A673 (cell line): ENCODE measurements at regions of chr4 and their contacts with region 1.

Region 1: DNA sequence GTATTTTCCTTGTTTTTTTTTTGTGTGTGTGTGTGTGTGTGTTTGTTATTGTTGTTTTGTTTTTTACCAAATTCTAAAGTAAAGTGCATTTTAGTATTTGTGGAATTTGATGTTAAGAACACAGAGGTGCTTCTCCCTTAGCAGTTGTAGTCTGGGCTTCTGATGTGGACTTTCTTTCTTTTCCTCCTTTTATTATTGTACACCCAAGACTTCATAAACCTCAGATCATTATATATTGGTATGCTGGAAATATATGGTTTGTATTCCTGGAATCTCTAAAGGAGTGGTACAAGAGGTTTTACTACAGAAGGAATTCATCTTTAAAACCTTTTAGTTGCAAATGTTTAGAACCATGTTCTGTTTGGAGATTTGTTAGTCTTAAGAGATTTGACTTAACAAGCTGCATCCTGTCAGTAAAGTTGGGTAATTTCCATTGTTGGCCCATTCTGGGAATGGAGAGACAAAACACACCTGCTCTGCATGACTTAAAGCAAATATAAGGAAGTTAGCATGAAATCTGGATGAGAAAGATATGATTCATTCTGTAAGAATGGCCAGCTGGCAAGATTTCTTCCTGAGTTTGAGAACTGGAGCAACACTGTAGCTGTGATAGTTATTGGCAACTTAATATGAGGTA is 64.0 kb downstream of the SMAD1 start:
- DNase-seq: peak; percentile 77
- H3K4me3 ChIP-seq: no peak overlapping the region
- H3K27ac ChIP-seq: peak overlapping the region; percentile 73
- H3K4me1 ChIP-seq: peaks cover 43% of the 10 kb centered on the region
- H3K27me3 ChIP-seq: no peaks in the 10 kb centered on the region
- CTCF ChIP-seq: no peak

Region 2: GRCh38 chr4:145481164-145481941 is 64.3 kb before region 1 on chr4 and contains the start of gene SMAD1:
- CTCF ChIA-PET with region 1: no interaction called
- POLR2A ChIA-PET with region 1: no interaction called
- intact Hi-C with region 1: loop called (anchors 5 kb)
- DNase-seq: peak; percentile 91
- H3K4me3 ChIP-seq: peak within 1 kb of the TSS; percentile 88
- H3K27ac ChIP-seq: peak within 1 kb of the TSS; percentile 98
- H3K4me1 ChIP-seq: peaks cover 22% of the 10 kb centered on the region
- H3K27me3 ChIP-seq: no peaks in the 10 kb centered on the region
- CTCF ChIP-seq: no peak
- total RNA-seq, gene SMAD1: 30.0 and 33.7 TPM in 2 replicates